Activated naive CD4-positive, alpha-beta T cell treated with anti-CD3 and anti-CD28 coated beads for 36 hours (primary cell): ENCODE measurements at regions of chr3 and their contacts with region 1.

Region 1: GRCh38 chr3:52056968-52057805 is 816 bp upstream of the DUSP7 start:
- DNase-seq: peak; percentile 100
- H3K4me3 Mint-ChIP-seq: peak overlapping the region; percentile 78
- H3K27ac Mint-ChIP-seq: peak overlapping the region; percentile 76
- H3K4me1 Mint-ChIP-seq: peaks cover 25% of the 10 kb centered on the region
- H3K27me3 Mint-ChIP-seq: no peaks in the 10 kb centered on the region

Region 2: GRCh38 chr3:51498876-51499738 is 558.1 kb before region 1 on chr3:
- CTCF ChIA-PET with region 1: no interaction called
- intact Hi-C with region 1: loop called (anchors 2 kb)
- DNase-seq: peak; percentile 91
- H3K4me3 Mint-ChIP-seq: peak overlapping the region; percentile 98
- H3K27ac Mint-ChIP-seq: peak overlapping the region; percentile 98
- H3K4me1 Mint-ChIP-seq: peaks cover 21% of the 10 kb centered on the region
- H3K27me3 Mint-ChIP-seq: no peaks in the 10 kb centered on the region

Region 3: GRCh38 chr3:51874889-51875288 is 182.3 kb before region 1 on chr3:
- CTCF ChIA-PET with region 1: no interaction called
- intact Hi-C with region 1: no loop called
- DNase-seq: no peak
- H3K4me3 Mint-ChIP-seq: no peak overlapping the region
- H3K27ac Mint-ChIP-seq: no peak overlapping the region
- H3K4me1 Mint-ChIP-seq: no peaks in the 10 kb centered on the region
- H3K27me3 Mint-ChIP-seq: peaks cover 3% of the 10 kb centered on the region

Region 4: DNA sequence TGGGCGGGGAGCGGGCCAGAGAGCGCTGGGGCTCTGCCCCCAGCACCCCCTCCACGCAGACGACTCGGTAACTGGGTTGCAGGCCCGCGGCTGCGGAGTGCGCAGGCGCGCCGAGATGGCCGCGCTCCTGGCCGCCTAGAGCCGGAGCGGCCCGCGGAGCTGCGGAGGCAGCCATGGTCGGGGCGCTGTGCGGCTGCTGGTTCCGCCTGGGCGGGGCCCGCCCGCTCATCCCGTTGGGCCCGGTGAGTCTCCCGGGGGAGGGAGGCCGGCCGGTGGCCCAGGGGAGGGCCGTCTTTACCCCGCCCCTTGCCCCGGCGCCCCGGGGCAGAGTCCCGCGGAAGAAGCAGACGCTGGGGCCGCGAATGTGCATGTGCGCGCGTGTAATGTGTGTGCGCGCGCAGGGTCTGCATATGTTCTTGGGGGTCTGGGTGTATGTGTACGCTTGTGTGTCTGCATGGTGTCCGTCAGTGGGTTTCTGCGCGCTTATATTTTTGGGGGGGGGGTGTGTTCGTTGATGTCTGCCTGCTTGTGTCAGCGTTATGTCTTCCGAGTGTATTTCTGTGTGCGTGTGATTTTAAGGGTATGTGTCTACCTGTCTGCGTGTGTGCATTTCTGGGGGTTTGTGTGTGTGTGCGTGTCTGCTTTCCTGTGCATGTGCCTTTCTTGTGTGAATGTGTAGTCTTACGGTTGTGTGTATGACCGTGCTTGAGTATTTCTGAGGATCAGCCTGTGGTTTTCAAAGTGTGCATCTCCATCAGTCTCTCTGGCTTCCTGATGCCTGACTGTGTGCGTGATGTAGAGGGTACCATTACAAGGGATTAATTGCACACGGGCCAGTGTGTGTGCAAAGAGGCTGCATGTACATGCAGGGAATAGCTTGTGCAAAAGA is 82.0 kb before region 1 on chr3 and contains the start of gene ABHD14A:
- CTCF ChIA-PET with region 1: no interaction called
- intact Hi-C with region 1: loop called (anchors 2 kb)
- DNase-seq: peak; percentile 70
- H3K4me3 Mint-ChIP-seq: peak within 1 kb of the TSS; percentile 99
- H3K27ac Mint-ChIP-seq: peak within 1 kb of the TSS; percentile 97
- H3K4me1 Mint-ChIP-seq: peaks cover 37% of the 10 kb centered on the region
- H3K27me3 Mint-ChIP-seq: no peaks in the 10 kb centered on the region
- total RNA-seq, gene ABHD14A: 5.4 to 5.7 TPM

Region 5: GRCh38 chr3:52123106-52123725 is 66.0 kb after region 1 on chr3:
- CTCF ChIA-PET with region 1: interaction called, 32 read pairs
- intact Hi-C with region 1: loop called (anchors 1 kb)
- DNase-seq: peak; percentile 73
- H3K4me3 Mint-ChIP-seq: no peak overlapping the region
- H3K27ac Mint-ChIP-seq: no peak overlapping the region
- H3K4me1 Mint-ChIP-seq: peaks cover 3% of the 10 kb centered on the region
- H3K27me3 Mint-ChIP-seq: no peaks in the 10 kb centered on the region

Region 6: DNA sequence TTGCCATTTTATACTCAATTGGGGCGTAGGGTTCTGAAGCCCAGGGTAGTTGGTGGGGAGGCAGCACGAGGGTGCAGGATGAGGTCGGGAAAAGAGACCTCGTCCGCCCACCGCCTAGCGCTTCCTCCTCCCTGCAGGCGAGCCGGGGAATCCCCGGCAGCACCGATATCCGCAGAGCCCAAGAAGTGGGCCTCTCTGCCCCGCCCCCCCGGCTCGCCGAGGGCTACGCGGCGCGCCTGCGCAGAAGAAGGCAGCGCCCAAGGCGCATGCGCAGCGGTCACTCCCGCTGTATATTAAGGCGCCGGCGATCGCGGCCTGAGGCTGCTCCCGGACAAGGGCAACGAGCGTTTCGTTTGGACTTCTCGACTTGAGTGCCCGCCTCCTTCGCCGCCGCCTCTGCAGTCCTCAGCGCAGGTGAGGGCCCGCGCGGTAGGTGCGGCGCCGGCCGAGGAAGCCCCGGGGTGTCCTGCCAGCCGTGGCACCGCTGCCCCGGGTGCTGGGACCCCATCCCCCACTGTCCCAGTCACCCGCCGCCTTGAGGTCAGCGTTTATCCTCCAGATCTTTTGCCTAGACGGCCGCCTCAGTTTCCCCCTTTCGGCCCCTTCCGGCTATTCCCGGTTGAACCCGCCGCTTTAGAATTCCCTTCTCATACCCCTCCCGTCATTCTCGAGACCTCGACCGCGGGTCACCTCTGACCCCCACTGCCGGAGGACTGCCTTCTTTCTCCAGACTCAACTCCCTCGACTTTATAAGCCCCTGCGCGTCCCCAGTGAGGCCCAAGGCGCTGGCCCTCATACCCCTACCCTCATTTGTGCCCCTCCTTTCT is 140.9 kb after region 1 on chr3 and contains the start of gene ALAS1:
- CTCF ChIA-PET with region 1: no interaction called
- intact Hi-C with region 1: loop called (anchors 1 kb)
- DNase-seq: peak; percentile 94
- H3K4me3 Mint-ChIP-seq: peak within 1 kb of the TSS; percentile 92
- H3K27ac Mint-ChIP-seq: peak within 1 kb of the TSS; percentile 84
- H3K4me1 Mint-ChIP-seq: peaks cover 56% of the 10 kb centered on the region
- H3K27me3 Mint-ChIP-seq: no peaks in the 10 kb centered on the region
- total RNA-seq, gene ALAS1: 35.7 to 37.8 TPM

Region 7: GRCh38 chr3:52278510-52279069 is 221.4 kb after region 1 on chr3 and contains the start of gene WDR82:
- CTCF ChIA-PET with region 1: no interaction called
- intact Hi-C with region 1: loop called (anchors 5 kb)
- DNase-seq: peak; percentile 98
- H3K4me3 Mint-ChIP-seq: peak within 1 kb of the TSS; percentile 95
- H3K27ac Mint-ChIP-seq: peak within 1 kb of the TSS; percentile 98
- H3K4me1 Mint-ChIP-seq: peaks cover 57% of the 10 kb centered on the region
- H3K27me3 Mint-ChIP-seq: no peaks in the 10 kb centered on the region
- total RNA-seq, gene WDR82: 176 to 177 TPM

Region 8: GRCh38 chr3:52606373-52607085 is 549.3 kb after region 1 on chr3:
- CTCF ChIA-PET with region 1: no interaction called
- intact Hi-C with region 1: no loop called
- DNase-seq: no peak
- H3K4me3 Mint-ChIP-seq: no peak overlapping the region
- H3K27ac Mint-ChIP-seq: no peak overlapping the region
- H3K4me1 Mint-ChIP-seq: no peaks in the 10 kb centered on the region
- H3K27me3 Mint-ChIP-seq: no peaks in the 10 kb centered on the region

Region 9: GRCh38 chr3:52685709-52686691 is 628.8 kb after region 1 on chr3 and contains the starts of genes GNL3 and PBRM1:
- CTCF ChIA-PET with region 1: no interaction called
- intact Hi-C with region 1: loop called (anchors 10 kb)
- DNase-seq: peak; percentile 95
- H3K4me3 Mint-ChIP-seq: peak within 1 kb of the TSS; percentile 90
- H3K27ac Mint-ChIP-seq: peak within 1 kb of the TSS; percentile 91
- H3K4me1 Mint-ChIP-seq: peaks cover 72% of the 10 kb centered on the region
- H3K27me3 Mint-ChIP-seq: no peaks in the 10 kb centered on the region
- total RNA-seq, gene GNL3: 195 to 197 TPM
- total RNA-seq, gene PBRM1: 49.9 to 57.7 TPM